Right lobe of liver (tissue), 6 donors: ENCODE measurements at regions of chr9 and their contacts with region 1.

Region 1: GRCh38 chr9:133792721-133793470 is 54.7 kb upstream of the SARDH start:
- DNase-seq: peak; percentile 75 to 84 (median 83)
- ATAC-seq: peak; percentile 71 to 79 (median 76)
- H3K4me3 ChIP-seq: no peak overlapping the region
- H3K27ac ChIP-seq: no peak overlapping the region
- H3K4me1 ChIP-seq: peaks cover 0 to 25% (median 12%) of the 10 kb centered on the region in 4 donors
- H3K27me3 ChIP-seq: no peaks in the 10 kb centered on the region
- CTCF ChIP-seq: peak; percentile 89 to 96 (median 92)
- POLR2A ChIP-seq: no peak

Region 2: DNA sequence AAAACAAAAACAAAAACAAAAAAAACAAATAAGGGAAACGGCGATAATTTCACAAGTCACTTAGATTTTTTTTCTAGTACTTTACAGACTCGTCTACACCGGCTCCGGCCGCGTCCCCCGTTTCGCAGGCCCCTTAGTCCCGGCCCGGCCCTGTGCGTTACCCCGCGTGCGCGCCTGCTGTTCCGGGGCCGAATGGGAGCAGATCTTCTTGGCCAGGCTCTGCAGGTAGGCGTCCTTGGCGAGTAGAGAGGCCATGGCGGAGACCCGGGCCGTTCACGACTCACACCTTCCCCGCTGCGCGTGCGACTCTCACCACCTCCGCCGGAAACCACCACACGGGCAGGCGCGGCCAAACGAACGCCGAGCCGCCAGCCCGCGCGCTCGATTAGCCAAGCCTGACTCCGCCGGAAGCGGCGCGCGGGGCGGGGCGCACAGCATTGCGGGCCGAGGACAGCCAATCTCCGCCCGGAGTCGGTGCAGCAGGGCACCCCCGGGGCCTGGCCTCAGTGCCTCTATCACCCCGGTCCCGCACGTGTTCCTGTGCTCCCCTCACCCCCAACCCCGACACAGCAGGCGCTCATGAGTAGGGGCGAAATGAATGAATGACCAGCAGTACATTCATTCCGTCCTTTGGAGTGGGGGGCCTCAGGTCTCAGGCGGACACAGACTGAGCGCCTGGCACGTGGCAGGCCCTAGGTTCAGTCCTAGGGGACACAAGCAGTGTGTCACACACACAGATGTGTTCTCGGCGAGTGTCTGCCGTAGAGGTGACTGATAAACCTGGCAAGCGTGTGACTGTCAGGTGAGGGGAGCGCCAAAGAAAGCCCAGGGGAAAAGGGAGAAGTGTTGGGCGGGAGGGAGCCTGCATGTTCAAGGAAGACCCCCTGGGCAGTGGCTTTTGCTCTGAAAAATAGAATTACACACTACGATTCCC is 456.8 kb before region 1 on chr9 and contains the start of gene SURF6:
- intact Hi-C with region 1: no loop called
- DNase-seq: peak; percentile 94
- ATAC-seq: peak; percentile 95 to 98 (median 97)
- H3K4me3 ChIP-seq: peak within 1 kb of the TSS; percentile 61 to 94 (median 66)
- H3K27ac ChIP-seq: peak within 1 kb of the TSS in 2 of 3 donors; percentile 24 to 63
- H3K4me1 ChIP-seq: peaks cover 0 to 12% (median 4%) of the 10 kb centered on the region in 4 donors
- H3K27me3 ChIP-seq: no peaks in the 10 kb centered on the region
- CTCF ChIP-seq: no peak
- POLR2A ChIP-seq: peak; percentile 63
- total RNA-seq, gene SURF6: 5.8 to 8.8 (median 7.6) TPM

Region 3: GRCh38 chr9:133992780-133993634 is 200.1 kb after region 1 on chr9:
- intact Hi-C with region 1: loop called (anchors 5 kb)
- DNase-seq: peak; percentile 90 to 94 (median 92)
- ATAC-seq: peak; percentile 68 to 78 (median 72)
- H3K4me3 ChIP-seq: peak overlapping the region; percentile 66 to 75 (median 72)
- H3K27ac ChIP-seq: peak overlapping the region; percentile 86 to 95 (median 89)
- H3K4me1 ChIP-seq: peaks cover 0 to 24% (median 11%) of the 10 kb centered on the region in 4 donors
- H3K27me3 ChIP-seq: no peaks in the 10 kb centered on the region
- CTCF ChIP-seq: peak; percentile 10 to 55 (median 35)
- POLR2A ChIP-seq: peak; percentile 87

Region 4: DNA sequence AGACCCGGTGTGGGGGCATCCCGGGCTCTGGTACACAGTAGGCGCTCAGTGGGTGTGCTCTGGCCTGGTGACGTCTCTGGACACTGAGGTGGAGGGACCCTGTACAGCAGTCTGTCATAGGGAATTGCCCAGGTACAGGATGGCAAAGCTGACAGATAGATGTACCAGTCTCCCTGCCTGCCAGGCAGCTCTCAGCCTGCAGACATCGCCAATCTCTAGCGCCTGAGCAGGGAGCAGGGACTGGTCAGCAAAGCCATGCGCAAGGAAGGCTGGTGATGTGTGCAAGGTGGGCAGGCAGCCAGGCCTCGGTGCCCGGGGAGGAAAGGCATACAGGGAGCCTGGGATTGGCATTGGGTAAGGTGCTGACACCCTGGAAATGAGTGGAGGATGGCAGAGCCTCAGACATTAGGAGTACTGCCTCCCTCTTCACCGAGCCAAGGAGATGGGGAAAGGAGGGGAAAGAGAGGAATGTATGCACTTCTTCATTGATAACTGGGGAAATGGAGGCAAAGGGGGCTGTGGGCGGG is 308.8 kb after region 1 on chr9:
- intact Hi-C with region 1: loop called in 1 of 2 experiments (anchors 10 kb)
- DNase-seq: no peak
- ATAC-seq: peak in 2 of 4 donors; percentile 26 to 36
- H3K4me3 ChIP-seq: no peak overlapping the region
- H3K27ac ChIP-seq: no peak overlapping the region
- H3K4me1 ChIP-seq: no peaks in the 10 kb centered on the region
- H3K27me3 ChIP-seq: no peaks in the 10 kb centered on the region
- CTCF ChIP-seq: no peak
- POLR2A ChIP-seq: no peak

Region 5: GRCh38 chr9:134178768-134179551 is 386.1 kb after region 1 on chr9:
- intact Hi-C with region 1: no loop called
- DNase-seq: peak; percentile 85 to 92 (median 90)
- ATAC-seq: peak; percentile 58 to 68 (median 60)
- H3K4me3 ChIP-seq: peak overlapping the region in 1 of 3 donors; percentile 33
- H3K27ac ChIP-seq: peak overlapping the region; percentile 35 to 89 (median 83)
- H3K4me1 ChIP-seq: peaks cover 0 to 65% (median 37%) of the 10 kb centered on the region in 4 donors
- H3K27me3 ChIP-seq: no peaks in the 10 kb centered on the region
- CTCF ChIP-seq: peak in 2 of 4 donors; percentile 12 to 14
- POLR2A ChIP-seq: peak; percentile 67